ENCODE measurements at regions of chr5 and their contacts with region 1.

Region 1: DNA sequence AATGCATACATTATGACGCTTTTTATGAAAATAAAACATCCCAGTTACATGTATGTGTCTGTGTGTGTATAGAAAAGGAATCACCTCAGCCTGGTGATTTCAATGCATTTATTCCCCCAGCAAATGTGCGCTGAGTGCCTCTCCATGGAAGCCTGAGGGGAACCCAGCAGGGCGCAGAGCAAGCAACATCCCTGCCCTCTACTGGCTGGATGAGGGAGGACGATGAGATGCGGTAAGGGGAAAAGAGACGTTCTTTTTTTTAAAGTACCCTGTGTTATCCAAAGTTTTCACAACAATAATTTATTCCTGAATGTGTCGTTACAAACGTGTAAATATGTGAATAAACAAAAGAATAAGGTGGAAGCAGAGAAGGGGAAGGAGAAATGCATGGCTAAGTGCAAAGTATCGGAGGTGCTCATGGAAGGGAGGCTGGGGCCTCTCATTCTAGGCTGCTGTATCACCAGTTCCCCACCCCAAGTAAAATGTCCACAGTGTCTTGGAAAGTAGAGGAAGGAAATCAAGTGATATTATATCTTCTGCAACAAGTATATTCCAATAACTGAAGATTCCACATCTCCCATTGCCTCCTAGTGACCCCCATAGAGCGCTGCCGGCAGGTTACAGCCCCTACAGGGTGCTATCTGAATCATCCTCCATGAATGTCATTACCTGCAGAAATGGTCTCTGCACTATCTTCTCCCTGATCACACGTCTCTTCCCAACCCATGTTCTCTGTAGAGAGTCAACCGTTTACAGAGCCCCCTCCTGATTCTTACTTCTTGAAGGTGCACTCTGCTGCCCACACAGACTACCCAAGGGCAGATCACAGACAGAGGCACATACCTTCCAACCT is 13.0 kb upstream of the ABLIM3 start:
- DNase-seq: no peak
- ATAC-seq: peak; percentile 57 to 74 (median 64)
- H3K4me3 ChIP-seq: no peak overlapping the region
- H3K27ac ChIP-seq: no peak overlapping the region
- H3K4me1 ChIP-seq: peaks cover 0 to 13% (median 2%) of the 10 kb centered on the region in 4 donors
- H3K27me3 ChIP-seq: no peaks in the 10 kb centered on the region
- CTCF ChIP-seq: peak; percentile 48 to 77 (median 72)
- POLR2A ChIP-seq: no peak

Region 2: DNA sequence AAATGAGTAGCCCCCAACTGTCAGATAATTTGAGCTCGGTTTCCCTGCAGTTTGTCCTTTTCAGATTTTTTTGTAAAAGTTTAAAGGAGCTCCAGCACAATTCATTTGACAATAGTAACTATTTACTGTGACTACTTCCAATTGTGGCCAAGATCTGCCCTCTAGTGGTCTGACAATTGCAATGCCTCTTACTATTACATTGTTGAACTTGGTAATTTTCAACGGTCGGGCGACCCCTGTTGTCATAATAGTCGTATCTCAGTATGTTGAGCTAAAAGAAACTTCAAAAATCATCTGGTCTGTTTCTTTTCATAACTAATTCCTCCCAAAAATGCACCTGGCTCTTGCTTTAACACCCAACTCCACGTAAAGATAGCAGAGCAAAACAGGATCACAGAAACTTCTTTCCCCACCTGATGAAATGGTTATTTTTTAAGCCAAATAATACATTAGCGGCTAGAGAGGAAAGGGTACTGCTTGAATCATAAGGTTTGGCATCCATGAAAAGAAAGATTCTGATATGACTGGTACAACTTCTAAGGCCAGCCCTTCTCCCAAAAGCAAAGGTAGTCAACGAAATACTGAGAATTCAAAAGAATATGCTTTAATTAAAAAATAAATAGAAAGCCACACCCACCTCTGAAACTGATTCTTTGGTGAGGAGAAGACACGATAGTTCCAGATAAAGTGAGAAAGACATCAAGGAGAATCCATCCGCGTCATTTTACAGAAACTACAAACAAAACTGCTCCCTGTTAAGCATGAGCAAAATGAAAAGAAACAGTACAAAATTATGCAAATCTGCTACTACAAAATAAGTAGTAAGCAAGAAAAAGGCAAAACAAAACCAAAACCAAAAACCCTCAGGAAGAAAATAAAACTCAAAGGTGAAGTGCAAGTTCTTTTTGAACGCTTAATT is 397.0 kb before region 1 on chr5:
- intact Hi-C with region 1: loop called in 1 of 2 experiments (anchors 10 kb)
- DNase-seq: peak in 2 of 3 donors; percentile 54 to 77
- ATAC-seq: peak; percentile 95 to 97 (median 96)
- H3K4me3 ChIP-seq: no peak overlapping the region
- H3K27ac ChIP-seq: no peak overlapping the region
- H3K4me1 ChIP-seq: no peaks in the 10 kb centered on the region
- H3K27me3 ChIP-seq: no peaks in the 10 kb centered on the region
- CTCF ChIP-seq: peak; percentile 91 to 99 (median 95)
- POLR2A ChIP-seq: no peak

Region 3: DNA sequence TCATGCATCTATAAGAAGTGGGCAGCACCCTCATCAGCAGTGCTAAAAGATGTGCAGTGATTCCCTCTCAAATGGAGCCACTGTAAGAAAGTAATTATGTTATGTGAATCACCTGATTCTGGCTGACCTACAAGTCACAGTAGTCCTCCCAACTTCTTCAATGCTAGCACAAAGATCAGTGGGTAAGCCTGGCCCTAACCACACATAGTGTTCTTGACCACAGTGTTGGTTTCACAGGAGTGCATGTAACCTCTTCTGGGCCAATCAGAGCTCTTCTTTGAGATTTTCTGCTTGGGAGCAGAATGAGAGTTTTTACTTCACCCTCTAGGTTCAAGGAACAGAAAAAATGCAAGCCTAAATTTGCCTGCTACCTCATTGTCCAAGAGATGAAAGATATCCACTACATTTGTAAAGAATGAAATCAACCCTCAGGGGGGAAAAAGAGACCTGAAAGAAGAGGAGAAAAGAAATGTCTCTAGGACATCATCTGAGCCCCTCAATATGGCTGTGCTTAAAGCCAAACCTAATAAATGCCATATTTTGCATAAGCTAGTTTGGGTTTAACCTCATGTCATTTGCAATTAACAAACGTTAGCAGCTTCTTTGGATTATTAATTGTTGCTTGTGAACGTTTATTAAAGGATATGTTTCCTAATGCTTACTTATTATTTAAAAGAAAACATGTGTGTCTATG is 367.2 kb before region 1 on chr5:
- intact Hi-C with region 1: no loop called
- DNase-seq: no peak
- ATAC-seq: peak in 1 of 4 donors; percentile 22
- H3K4me3 ChIP-seq: no peak overlapping the region
- H3K27ac ChIP-seq: no peak overlapping the region
- H3K4me1 ChIP-seq: no peaks in the 10 kb centered on the region
- H3K27me3 ChIP-seq: no peaks in the 10 kb centered on the region
- CTCF ChIP-seq: no peak
- POLR2A ChIP-seq: no peak

Region 4: GRCh38 chr5:149238583-149238982 is 110.3 kb after region 1 on chr5:
- intact Hi-C with region 1: loop called in 1 of 2 experiments (anchors 10 kb)
- DNase-seq: no peak
- ATAC-seq: no peak
- H3K4me3 ChIP-seq: no peak overlapping the region
- H3K27ac ChIP-seq: no peak overlapping the region
- H3K4me1 ChIP-seq: no peaks in the 10 kb centered on the region
- H3K27me3 ChIP-seq: no peaks in the 10 kb centered on the region
- CTCF ChIP-seq: peak in 1 of 4 donors; percentile 14
- POLR2A ChIP-seq: no peak

Region 5: DNA sequence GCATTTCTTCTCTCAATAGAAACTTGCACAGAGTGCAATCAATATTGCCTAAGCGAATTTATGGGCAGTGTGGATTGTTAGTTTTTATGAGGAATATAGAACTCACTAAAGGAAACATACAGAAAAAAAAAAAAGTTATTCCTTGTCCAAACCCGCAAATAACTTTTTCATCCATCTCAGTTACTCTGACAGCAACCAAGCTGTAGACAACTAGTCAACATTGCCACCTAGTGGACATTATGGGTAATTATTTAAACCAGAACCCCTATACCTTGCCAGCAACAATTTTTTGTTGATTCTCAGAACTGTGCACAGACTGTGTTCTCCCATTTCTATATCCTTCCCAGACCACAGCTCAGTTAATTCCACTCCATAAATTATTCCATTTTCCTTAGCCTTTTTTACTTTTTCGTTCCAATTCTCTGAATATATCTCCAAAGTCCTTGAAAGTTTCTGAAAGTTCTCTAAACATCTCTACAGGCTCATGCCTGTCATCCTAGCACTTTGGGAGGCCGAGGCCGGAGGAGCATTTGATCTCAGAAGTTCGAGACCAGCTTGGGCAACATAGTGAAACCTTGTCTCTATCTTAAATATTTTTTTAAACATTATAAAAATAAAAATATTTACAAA is 140.8 kb after region 1 on chr5:
- intact Hi-C with region 1: loop called in 1 of 2 experiments (anchors 5 kb)
- DNase-seq: no peak
- ATAC-seq: peak; percentile 33 to 54 (median 43)
- H3K4me3 ChIP-seq: no peak overlapping the region
- H3K27ac ChIP-seq: no peak overlapping the region
- H3K4me1 ChIP-seq: peaks cover 0 to 6% (median 1%) of the 10 kb centered on the region in 4 donors
- H3K27me3 ChIP-seq: no peaks in the 10 kb centered on the region
- CTCF ChIP-seq: peak; percentile 75 to 85 (median 82)
- POLR2A ChIP-seq: no peak

Measured in right lobe of liver (tissue), 6 donors.